ENCODE measurements at regions of chr16 and their contacts with region 1.

Region 1: GRCh38 chr16:46973207-46973995 is at the start of gene DNAJA2:
- DNase-seq: peak; percentile 96
- ATAC-seq: peak; percentile 94
- H3K4me3 ChIP-seq: peak within 1 kb of the TSS; percentile 77 to 94 (median 85)
- H3K4me3 Mint-ChIP-seq: peak within 1 kb of the TSS; percentile 94
- H3K27ac ChIP-seq: peak within 1 kb of the TSS; percentile 96 to 97
- H3K27ac Mint-ChIP-seq: peak within 1 kb of the TSS; percentile 97
- H3K4me1 ChIP-seq: peaks cover 21 to 22% of the 10 kb centered on the region in 2 donors
- H3K4me1 Mint-ChIP-seq: peaks cover 41% of the 10 kb centered on the region
- H3K27me3 ChIP-seq: no peaks in the 10 kb centered on the region
- H3K27me3 Mint-ChIP-seq: no peaks in the 10 kb centered on the region
- CTCF ChIP-seq: no peak
- total RNA-seq, gene DNAJA2: 57.0 and 57.3 TPM in 2 replicates

Region 2: GRCh38 chr16:46673320-46674013 is 299.9 kb before region 1 on chr16:
- CTCF ChIA-PET with region 1: interaction called, 7 read pairs
- POLR2A ChIA-PET with region 1: no interaction called
- intact Hi-C with region 1: loop called (anchors 5 kb)
- DNase-seq: peak; percentile 78
- ATAC-seq: peak; percentile 92
- H3K4me3 ChIP-seq: no peak overlapping the region
- H3K4me3 Mint-ChIP-seq: no peak overlapping the region
- H3K27ac ChIP-seq: no peak overlapping the region
- H3K27ac Mint-ChIP-seq: no peak overlapping the region
- H3K4me1 ChIP-seq: no peaks in the 10 kb centered on the region
- H3K4me1 Mint-ChIP-seq: no peaks in the 10 kb centered on the region
- H3K27me3 ChIP-seq: no peaks in the 10 kb centered on the region
- H3K27me3 Mint-ChIP-seq: no peaks in the 10 kb centered on the region
- CTCF ChIP-seq: peak; percentile 97

Region 3: DNA sequence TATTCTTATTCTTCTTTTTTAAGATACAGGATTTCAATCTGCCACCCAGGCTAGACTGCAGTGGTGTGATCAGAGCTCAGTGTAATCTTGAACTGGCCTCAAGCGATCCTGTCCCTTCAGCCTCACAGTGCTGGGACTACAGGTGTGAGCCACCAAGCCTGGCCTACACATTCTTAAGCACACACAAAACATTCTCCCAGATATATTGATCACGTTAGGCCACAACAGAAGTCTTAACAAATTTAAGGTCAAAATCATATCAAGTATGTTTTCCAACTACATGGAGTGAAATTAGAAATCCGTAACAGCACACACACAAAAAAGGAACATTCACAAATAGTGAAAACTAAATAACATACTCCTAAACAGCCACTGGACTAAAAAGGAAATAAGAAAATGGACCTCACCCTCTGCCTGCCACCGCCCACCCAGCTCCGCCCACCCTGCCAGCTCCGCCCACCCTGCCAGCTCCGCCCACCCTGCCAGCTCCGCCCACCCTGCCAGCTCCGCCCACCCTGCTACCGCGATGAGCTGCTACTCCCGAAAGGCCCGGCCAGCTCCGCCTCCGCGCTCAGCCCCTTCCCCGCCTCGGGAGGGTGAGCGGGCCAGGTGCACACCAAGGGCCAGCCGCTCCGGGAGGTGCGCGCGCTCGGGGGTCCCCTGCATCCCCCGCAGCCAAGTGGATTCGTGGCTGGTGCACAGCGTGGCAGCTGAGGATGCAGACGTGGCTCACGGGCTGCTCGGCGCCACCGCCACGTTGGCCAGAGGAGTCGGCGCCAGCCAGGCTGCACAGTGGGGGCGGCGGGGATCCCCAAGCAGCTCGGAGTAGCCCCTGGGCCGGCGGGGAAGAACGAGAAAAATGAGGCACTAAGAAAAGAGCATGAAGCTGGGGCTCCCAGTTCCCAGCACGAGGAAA is 183.6 kb before region 1 on chr16:
- CTCF ChIA-PET with region 1: no interaction called
- POLR2A ChIA-PET with region 1: interaction called, 8 read pairs
- intact Hi-C with region 1: loop called (anchors 2 kb)
- DNase-seq: peak; percentile 89
- ATAC-seq: peak; percentile 94
- H3K4me3 ChIP-seq: peak overlapping the region; percentile 21 to 90 (median 66)
- H3K4me3 Mint-ChIP-seq: peak overlapping the region; percentile 85
- H3K27ac ChIP-seq: peak overlapping the region; percentile 42 to 70
- H3K27ac Mint-ChIP-seq: peak overlapping the region; percentile 81
- H3K4me1 ChIP-seq: peaks cover 36 to 42% of the 10 kb centered on the region in 2 donors
- H3K4me1 Mint-ChIP-seq: peaks cover 52% of the 10 kb centered on the region
- H3K27me3 ChIP-seq: no peaks in the 10 kb centered on the region
- H3K27me3 Mint-ChIP-seq: no peaks in the 10 kb centered on the region
- CTCF ChIP-seq: no peak

Region 4: DNA sequence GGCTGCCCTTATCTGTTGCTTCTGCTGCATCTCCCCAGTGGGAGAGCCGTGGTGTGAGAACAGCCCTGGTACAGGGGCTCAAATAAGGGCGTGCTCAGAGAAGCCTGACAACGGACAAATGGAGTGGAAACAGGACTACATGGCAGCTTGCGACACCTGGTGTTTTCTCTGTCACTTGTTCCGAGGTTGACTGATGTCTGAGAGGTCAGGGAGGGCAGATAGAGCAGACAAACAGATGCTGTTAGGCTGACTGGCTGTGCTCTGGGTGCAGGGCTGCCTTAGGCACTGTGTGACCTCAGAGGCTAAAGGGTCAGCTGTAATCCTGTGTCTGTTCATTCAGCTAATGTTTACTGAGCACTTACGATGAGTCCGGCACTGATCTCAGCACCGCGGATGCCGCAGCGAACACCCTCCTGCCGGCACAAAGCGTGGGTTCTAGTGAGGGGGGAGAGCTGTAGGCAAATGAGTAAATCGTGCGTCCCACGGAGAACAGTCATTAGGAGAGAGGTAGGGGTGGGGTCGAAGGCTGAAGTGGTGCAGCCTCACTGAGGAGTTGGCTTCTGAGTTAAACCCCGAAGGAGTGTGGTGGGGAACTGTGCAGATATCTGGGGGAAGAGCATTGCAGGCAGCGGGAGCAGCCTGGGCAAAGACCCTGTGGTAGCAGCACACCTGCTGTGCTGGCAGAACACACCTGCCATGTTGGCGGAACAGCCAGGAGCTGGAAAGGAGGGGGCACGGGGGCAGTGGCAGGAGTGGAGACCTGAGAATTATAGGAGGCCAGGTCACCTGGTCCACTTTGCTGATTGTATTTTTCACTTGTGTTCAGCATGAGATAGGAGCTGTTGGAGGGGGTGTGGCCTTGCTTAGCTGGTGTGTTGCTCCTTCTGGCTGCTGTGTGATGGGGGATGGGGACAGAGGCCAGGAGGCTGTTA is 54.3 kb before region 1 on chr16:
- CTCF ChIA-PET with region 1: interaction called, 7 read pairs
- POLR2A ChIA-PET with region 1: no interaction called
- intact Hi-C with region 1: loop called (anchors 5 kb)
- DNase-seq: peak; percentile 79
- ATAC-seq: peak; percentile 62
- H3K4me3 ChIP-seq: peak overlapping the region in 3 of 5 experiments; percentile 11 to 53 (median 33)
- H3K4me3 Mint-ChIP-seq: peak overlapping the region; percentile 75
- H3K27ac ChIP-seq: peak overlapping the region; percentile 23 to 54
- H3K27ac Mint-ChIP-seq: peak overlapping the region; percentile 85
- H3K4me1 ChIP-seq: peaks cover 45 to 68% of the 10 kb centered on the region in 2 donors
- H3K4me1 Mint-ChIP-seq: peaks cover 67% of the 10 kb centered on the region
- H3K27me3 ChIP-seq: no peaks in the 10 kb centered on the region
- H3K27me3 Mint-ChIP-seq: no peaks in the 10 kb centered on the region
- CTCF ChIP-seq: peak; percentile 47

Region 5: DNA sequence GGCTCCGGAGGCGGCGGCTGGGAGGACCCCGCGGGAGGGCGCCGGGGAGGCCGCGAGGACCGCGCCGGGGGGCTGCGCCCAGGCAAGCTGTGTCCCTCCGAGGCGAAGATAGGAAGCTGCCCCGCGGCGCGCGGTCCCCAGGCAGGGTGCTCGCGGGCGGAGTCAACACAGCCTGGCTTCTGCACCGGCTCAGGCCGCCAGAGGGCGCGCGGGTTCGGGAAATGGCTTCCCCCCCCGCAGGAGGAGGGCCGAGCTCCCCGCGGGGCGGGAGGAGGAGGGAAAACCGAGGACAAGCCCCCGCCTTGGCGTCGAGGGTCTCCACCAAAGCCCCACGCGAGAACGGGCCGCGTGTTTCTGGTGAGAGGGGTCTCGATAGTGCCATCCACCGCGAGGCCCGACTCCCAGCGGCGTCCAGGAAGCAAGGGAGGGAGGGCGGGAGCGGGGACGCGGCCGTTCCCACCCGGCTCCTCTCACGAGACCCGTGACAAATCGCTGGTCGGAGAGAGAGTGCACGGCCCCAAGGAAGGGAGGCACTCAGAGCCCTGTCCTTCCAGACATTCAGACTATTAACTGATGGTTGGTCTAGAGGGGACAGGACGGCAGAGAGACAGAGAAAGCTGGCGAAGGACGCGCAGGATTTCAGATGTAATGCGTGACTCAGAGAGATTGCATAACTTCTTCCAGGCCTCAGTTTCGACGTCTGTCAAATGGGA is 64.5 kb after region 1 on chr16:
- CTCF ChIA-PET with region 1: interaction called, 18 read pairs
- POLR2A ChIA-PET with region 1: interaction called, 3 read pairs
- intact Hi-C with region 1: loop called (anchors 1 kb)
- DNase-seq: peak; percentile 90
- ATAC-seq: peak; percentile 98
- H3K4me3 ChIP-seq: peak overlapping the region; percentile 53 to 90 (median 63)
- H3K4me3 Mint-ChIP-seq: peak overlapping the region; percentile 90
- H3K27ac ChIP-seq: peak overlapping the region in 1 of 2 donors; percentile 52
- H3K27ac Mint-ChIP-seq: peak overlapping the region; percentile 68
- H3K4me1 ChIP-seq: peaks cover 3 to 26% of the 10 kb centered on the region in 2 donors
- H3K4me1 Mint-ChIP-seq: peaks cover 25% of the 10 kb centered on the region
- H3K27me3 ChIP-seq: no peaks in the 10 kb centered on the region
- H3K27me3 Mint-ChIP-seq: no peaks in the 10 kb centered on the region
- CTCF ChIP-seq: peak; percentile 95

Region 6: GRCh38 chr16:47492428-47493377 is 519.3 kb after region 1 on chr16:
- CTCF ChIA-PET with region 1: no interaction called
- POLR2A ChIA-PET with region 1: no interaction called
- intact Hi-C with region 1: loop called (anchors 5 kb)
- DNase-seq: peak; percentile 72
- ATAC-seq: peak; percentile 85
- H3K4me3 ChIP-seq: peak overlapping the region; percentile 19 to 71 (median 37)
- H3K4me3 Mint-ChIP-seq: peak overlapping the region; percentile 96
- H3K27ac ChIP-seq: peak overlapping the region; percentile 81 to 85
- H3K27ac Mint-ChIP-seq: peak overlapping the region; percentile 98
- H3K4me1 ChIP-seq: peaks cover 37 to 40% of the 10 kb centered on the region in 2 donors
- H3K4me1 Mint-ChIP-seq: peaks cover 55% of the 10 kb centered on the region
- H3K27me3 ChIP-seq: no peaks in the 10 kb centered on the region
- H3K27me3 Mint-ChIP-seq: no peaks in the 10 kb centered on the region
- CTCF ChIP-seq: no peak

Measured in B cell (primary cell).